ENCODE measurements at regions of chr10 and their contacts with region 1.

Region 1: GRCh38 chr10:110252151-110252550 is 44.7 kb downstream of the MXI1 start:
- DNase-seq: no peak
- H3K4me3 Mint-ChIP-seq: no peak overlapping the region
- H3K27ac Mint-ChIP-seq: no peak overlapping the region
- H3K4me1 Mint-ChIP-seq: peaks cover 41% of the 10 kb centered on the region
- H3K27me3 Mint-ChIP-seq: peaks cover 8% of the 10 kb centered on the region

Region 2: GRCh38 chr10:110168601-110169481 is 83.3 kb before region 1 on chr10:
- CTCF ChIA-PET with region 1: no interaction called
- intact Hi-C with region 1: no loop called
- DNase-seq: peak; percentile 47
- H3K4me3 Mint-ChIP-seq: no peak overlapping the region
- H3K27ac Mint-ChIP-seq: no peak overlapping the region
- H3K4me1 Mint-ChIP-seq: peaks cover 27% of the 10 kb centered on the region
- H3K27me3 Mint-ChIP-seq: peaks cover 65% of the 10 kb centered on the region

Region 3: DNA sequence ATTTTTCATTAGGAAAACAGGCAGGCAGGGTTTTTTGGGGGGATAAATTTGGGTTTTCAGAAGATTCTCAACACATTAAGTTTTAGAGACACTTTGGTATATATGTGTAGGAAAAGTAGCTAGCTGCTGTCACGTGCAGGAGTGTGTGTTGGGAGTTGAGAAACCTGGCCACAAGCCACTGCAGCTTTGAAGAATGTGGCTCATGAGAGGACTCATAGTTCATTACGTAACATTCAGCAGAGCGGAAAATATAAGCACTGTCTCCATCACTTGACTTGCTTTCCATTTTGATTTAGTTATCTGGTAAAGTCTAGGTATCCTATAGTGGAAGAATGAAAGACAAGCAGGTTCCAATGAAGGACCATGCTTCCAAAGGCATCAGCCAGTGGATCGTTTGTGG is 21.3 kb after region 1 on chr10:
- CTCF ChIA-PET with region 1: interaction called, 8 read pairs
- intact Hi-C with region 1: loop called (anchors 1 kb)
- DNase-seq: peak; percentile 74
- H3K4me3 Mint-ChIP-seq: no peak overlapping the region
- H3K27ac Mint-ChIP-seq: no peak overlapping the region
- H3K4me1 Mint-ChIP-seq: peaks cover 49% of the 10 kb centered on the region
- H3K27me3 Mint-ChIP-seq: no peaks in the 10 kb centered on the region

Region 4: GRCh38 chr10:111137012-111137411 is 884.9 kb after region 1 on chr10:
- CTCF ChIA-PET with region 1: no interaction called
- intact Hi-C with region 1: no loop called
- DNase-seq: no peak
- H3K4me3 Mint-ChIP-seq: no peak overlapping the region
- H3K27ac Mint-ChIP-seq: no peak overlapping the region
- H3K4me1 Mint-ChIP-seq: no peaks in the 10 kb centered on the region
- H3K27me3 Mint-ChIP-seq: peaks cover 10% of the 10 kb centered on the region

Measured in activated naive CD4-positive, alpha-beta T cell treated with anti-CD3 and anti-CD28 coated beads for 36 hours (primary cell).